Activated CD4-positive, alpha-beta memory T cell treated with anti-CD3 and anti-CD28 coated beads for 36 hours (primary cell): ENCODE measurements at regions of chr2 and their contacts with region 1.

Region 1: DNA sequence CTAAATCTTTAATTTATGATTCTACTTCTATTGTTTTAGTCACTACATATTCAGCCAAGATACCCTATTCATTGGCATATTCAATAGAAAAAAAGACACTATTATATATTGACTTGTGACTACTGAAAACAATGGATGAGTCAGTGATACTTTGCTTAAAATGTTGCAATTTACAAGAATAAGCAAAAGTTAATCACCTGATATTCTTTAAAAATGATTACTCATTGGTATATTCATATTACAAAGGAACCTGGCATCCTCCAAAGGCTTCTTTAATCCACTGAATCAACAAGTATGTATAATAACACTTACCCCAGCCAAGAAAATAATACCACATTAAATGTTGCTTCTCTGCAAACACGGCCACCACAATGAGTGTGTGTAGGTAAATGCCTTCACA is 87.8 kb downstream of the CALCRL start:
- DNase-seq: no peak
- H3K4me3 Mint-ChIP-seq: no peak overlapping the region
- H3K27ac Mint-ChIP-seq: no peak overlapping the region
- H3K4me1 Mint-ChIP-seq: no peaks in the 10 kb centered on the region
- H3K27me3 Mint-ChIP-seq: no peaks in the 10 kb centered on the region

Region 2: GRCh38 chr2:187372213-187372612 is 11.9 kb after region 1 on chr2:
- CTCF ChIA-PET with region 1: no interaction called
- POLR2A ChIA-PET with region 1: no interaction called
- intact Hi-C with region 1: loop called (anchors 1 kb)
- DNase-seq: no peak
- H3K4me3 Mint-ChIP-seq: no peak overlapping the region
- H3K27ac Mint-ChIP-seq: no peak overlapping the region
- H3K4me1 Mint-ChIP-seq: no peaks in the 10 kb centered on the region
- H3K27me3 Mint-ChIP-seq: no peaks in the 10 kb centered on the region

Region 3: GRCh38 chr2:187377340-187377739 is 17.1 kb after region 1 on chr2:
- CTCF ChIA-PET with region 1: no interaction called
- POLR2A ChIA-PET with region 1: no interaction called
- intact Hi-C with region 1: loop called (anchors 1 kb)
- DNase-seq: no peak
- H3K4me3 Mint-ChIP-seq: no peak overlapping the region
- H3K27ac Mint-ChIP-seq: no peak overlapping the region
- H3K4me1 Mint-ChIP-seq: no peaks in the 10 kb centered on the region
- H3K27me3 Mint-ChIP-seq: no peaks in the 10 kb centered on the region